HCT116 (cell line): ENCODE measurements at regions of chr21 and their contacts with region 1.

Region 1: GRCh38 chr21:20852866-20853265 is 145.3 kb upstream of the NCAM2 start:
- DNase-seq: no peak
- ATAC-seq: no peak
- H3K4me3 ChIP-seq: no peak overlapping the region
- H3K27ac ChIP-seq: no peak overlapping the region
- H3K4me1 ChIP-seq: no peaks in the 10 kb centered on the region
- H3K27me3 ChIP-seq: no peaks in the 10 kb centered on the region
- CTCF ChIP-seq: no peak
- POLR2A ChIP-seq: no peak
- RAD21 ChIP-seq: no peak

Region 2: DNA sequence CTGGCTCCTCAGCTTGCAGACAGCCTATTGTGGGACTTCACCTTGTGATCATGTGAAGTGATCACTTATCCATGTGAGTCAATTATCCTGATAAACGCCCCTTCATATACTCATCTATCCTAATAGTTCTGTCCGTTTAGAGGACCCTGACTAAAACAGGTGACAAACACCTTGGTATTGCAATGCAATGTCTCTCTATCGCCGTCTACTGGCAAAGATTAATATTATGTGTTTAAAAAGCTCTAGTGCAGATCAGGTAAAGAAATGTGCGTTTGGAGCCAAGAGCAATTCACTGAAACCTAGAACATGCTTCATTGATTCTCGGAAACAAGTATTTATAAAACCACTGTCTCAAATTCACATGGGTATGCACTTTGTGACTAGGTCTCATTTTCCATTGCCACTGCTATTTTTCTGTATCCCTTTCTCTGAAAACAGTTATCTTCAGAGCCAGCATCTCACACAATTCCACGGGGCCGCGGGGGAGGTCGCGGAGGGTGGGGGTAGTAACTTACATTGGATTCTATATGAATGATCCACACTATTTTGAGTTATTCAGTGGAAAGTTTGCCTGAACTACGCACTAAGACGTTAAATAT is 409.2 kb before region 1 on chr21:
- CTCF ChIA-PET with region 1: no interaction called
- POLR2A ChIA-PET with region 1: no interaction called
- RAD21 ChIA-PET with region 1: no interaction called
- intact Hi-C with region 1: no loop called
- DNase-seq: no peak
- ATAC-seq: no peak
- H3K4me3 ChIP-seq: no peak overlapping the region
- H3K27ac ChIP-seq: no peak overlapping the region
- H3K4me1 ChIP-seq: no peaks in the 10 kb centered on the region
- H3K27me3 ChIP-seq: no peaks in the 10 kb centered on the region
- CTCF ChIP-seq: peak in 2 of 3 experiments; percentile 17 to 38; a peak in 2 of 6 replicates
- POLR2A ChIP-seq: no peak
- RAD21 ChIP-seq: no peak

Region 3: GRCh38 chr21:20943561-20943997 is 90.7 kb after region 1 on chr21:
- CTCF ChIA-PET with region 1: no interaction called
- POLR2A ChIA-PET with region 1: no interaction called
- RAD21 ChIA-PET with region 1: no interaction called
- intact Hi-C with region 1: loop called (anchors 10 kb)
- DNase-seq: no peak
- ATAC-seq: no peak
- H3K4me3 ChIP-seq: no peak overlapping the region
- H3K27ac ChIP-seq: no peak overlapping the region
- H3K4me1 ChIP-seq: no peaks in the 10 kb centered on the region
- H3K27me3 ChIP-seq: no peaks in the 10 kb centered on the region
- CTCF ChIP-seq: no peak
- POLR2A ChIP-seq: no peak
- RAD21 ChIP-seq: no peak